CD8-positive, alpha-beta memory T cell (primary cell): ENCODE measurements at regions of chr15 and their contacts with region 1.

Region 1: GRCh38 chr15:41774062-41774881 is at the start of gene MAPKBP1:
- DNase-seq: peak; percentile 97 to 99 (median 98)
- H3K4me3 ChIP-seq: peak within 1 kb of the TSS; percentile 89
- H3K4me3 Mint-ChIP-seq: peak within 1 kb of the TSS; percentile 91 to 98 (median 95)
- H3K27ac ChIP-seq: peak within 1 kb of the TSS; percentile 68
- H3K27ac Mint-ChIP-seq: peak within 1 kb of the TSS; percentile 93 to 98 (median 96)
- H3K4me1 ChIP-seq: peaks cover 46% of the 10 kb centered on the region
- H3K4me1 Mint-ChIP-seq: peaks cover 53 to 64% (median 64%) of the 10 kb centered on the region in 3 donors
- H3K27me3 ChIP-seq: no peaks in the 10 kb centered on the region
- H3K27me3 Mint-ChIP-seq: no peaks in the 10 kb centered on the region
- total RNA-seq, gene MAPKBP1: 16.0 to 17.8 TPM

Region 2: DNA sequence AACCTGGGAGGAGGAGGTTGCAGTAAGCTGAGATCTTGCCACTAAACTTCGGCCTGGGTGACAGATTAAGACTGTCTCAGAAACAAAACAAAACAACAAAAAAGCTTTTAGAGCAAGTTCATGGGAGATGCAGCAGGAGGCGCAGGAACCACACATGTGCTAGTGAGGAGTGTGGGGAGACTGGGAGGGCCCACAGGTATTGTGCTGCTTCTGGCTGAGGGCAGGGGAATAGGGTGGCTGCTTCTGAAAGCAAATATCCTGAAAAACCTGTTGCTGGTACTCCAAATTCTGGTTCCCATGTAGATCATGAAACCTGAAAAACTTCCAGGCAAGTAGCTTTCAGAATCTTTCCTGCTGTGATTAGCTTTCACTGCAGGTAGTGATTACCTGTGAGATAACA is 193.2 kb before region 1 on chr15:
- CTCF ChIA-PET with region 1: no interaction called
- POLR2A ChIA-PET with region 1: no interaction called
- DNase-seq: no peak
- H3K4me3 ChIP-seq: no peak overlapping the region
- H3K4me3 Mint-ChIP-seq: no peak overlapping the region
- H3K27ac ChIP-seq: no peak overlapping the region
- H3K27ac Mint-ChIP-seq: no peak overlapping the region
- H3K4me1 ChIP-seq: no peaks in the 10 kb centered on the region
- H3K4me1 Mint-ChIP-seq: peaks cover 8 to 9% (median 9%) of the 10 kb centered on the region in 3 donors
- H3K27me3 ChIP-seq: no peaks in the 10 kb centered on the region
- H3K27me3 Mint-ChIP-seq: peaks cover 30 to 33% of the 10 kb centered on the region in 2 donors

Region 3: DNA sequence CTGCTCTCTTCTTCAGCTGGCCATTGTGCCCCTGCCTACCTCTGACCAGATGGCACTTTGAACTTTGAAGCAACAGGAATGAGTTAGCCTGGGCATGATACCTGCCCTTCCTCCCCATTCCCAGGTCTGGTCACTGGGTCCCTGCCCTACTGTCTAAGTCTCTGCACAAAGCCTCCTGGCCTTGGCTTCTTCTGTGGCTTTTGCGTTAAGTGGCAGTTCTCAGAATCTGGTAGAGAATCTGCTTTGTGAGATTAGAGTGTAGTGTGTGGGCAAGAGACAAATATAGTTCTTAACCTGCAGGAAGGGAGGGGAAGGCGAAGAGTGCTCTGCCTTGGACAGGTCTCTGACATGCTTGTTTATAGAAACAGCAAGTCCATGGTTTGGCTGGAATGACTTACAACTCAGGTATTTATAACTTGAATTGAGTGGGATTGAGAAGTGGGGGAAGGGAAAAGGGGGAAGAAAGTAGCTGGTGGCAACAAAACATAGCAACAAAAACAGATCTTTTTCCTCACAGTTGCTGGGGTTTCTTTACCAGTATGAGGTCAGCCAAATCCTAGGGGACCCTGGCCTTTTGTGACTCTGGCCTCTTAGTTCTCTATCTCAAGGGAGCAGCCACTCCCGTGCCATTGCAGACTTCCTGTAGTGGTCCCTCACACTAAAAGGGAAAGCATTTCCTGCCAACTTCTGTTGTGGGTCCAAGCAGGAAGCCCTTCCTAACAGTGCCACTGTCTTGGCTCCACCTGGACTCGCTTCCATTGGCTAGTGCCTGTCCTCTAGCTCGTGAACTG is 16.7 kb after region 1 on chr15:
- CTCF ChIA-PET with region 1: interaction called, 14 read pairs
- POLR2A ChIA-PET with region 1: no interaction called
- DNase-seq: no peak
- H3K4me3 ChIP-seq: no peak overlapping the region
- H3K4me3 Mint-ChIP-seq: peak overlapping the region in 2 of 7 donors; percentile 33 to 68
- H3K27ac ChIP-seq: no peak overlapping the region
- H3K27ac Mint-ChIP-seq: peak overlapping the region in 7 of 8 donors; percentile 8 to 80 (median 26)
- H3K4me1 ChIP-seq: peaks cover 22% of the 10 kb centered on the region
- H3K4me1 Mint-ChIP-seq: peaks cover 42 to 52% (median 50%) of the 10 kb centered on the region in 3 donors
- H3K27me3 ChIP-seq: no peaks in the 10 kb centered on the region
- H3K27me3 Mint-ChIP-seq: no peaks in the 10 kb centered on the region

Region 4: GRCh38 chr15:41817310-41817709 is 43.0 kb after region 1 on chr15:
- CTCF ChIA-PET with region 1: interaction called, 167 read pairs
- POLR2A ChIA-PET with region 1: interaction called, 3 read pairs
- DNase-seq: peak in 1 of 5 donors; percentile 29
- H3K4me3 ChIP-seq: no peak overlapping the region
- H3K4me3 Mint-ChIP-seq: no peak overlapping the region
- H3K27ac ChIP-seq: no peak overlapping the region
- H3K27ac Mint-ChIP-seq: peak overlapping the region in 1 of 8 donors; percentile 43
- H3K4me1 ChIP-seq: no peaks in the 10 kb centered on the region
- H3K4me1 Mint-ChIP-seq: no peaks in the 10 kb centered on the region
- H3K27me3 ChIP-seq: no peaks in the 10 kb centered on the region
- H3K27me3 Mint-ChIP-seq: no peaks in the 10 kb centered on the region

Region 5: GRCh38 chr15:41894791-41895463 is 120.7 kb after region 1 on chr15:
- CTCF ChIA-PET with region 1: interaction called, 154 read pairs
- POLR2A ChIA-PET with region 1: interaction called, 12 read pairs
- DNase-seq: peak; percentile 86 to 96 (median 88)
- H3K4me3 ChIP-seq: peak overlapping the region; percentile 29
- H3K4me3 Mint-ChIP-seq: peak overlapping the region; percentile 73 to 93 (median 84)
- H3K27ac ChIP-seq: peak overlapping the region; percentile 76
- H3K27ac Mint-ChIP-seq: peak overlapping the region; percentile 99 to 100 (median 100)
- H3K4me1 ChIP-seq: peaks cover 38% of the 10 kb centered on the region
- H3K4me1 Mint-ChIP-seq: peaks cover 29 to 59% (median 35%) of the 10 kb centered on the region in 3 donors
- H3K27me3 ChIP-seq: no peaks in the 10 kb centered on the region
- H3K27me3 Mint-ChIP-seq: peaks cover 0 to 1% of the 10 kb centered on the region in 2 donors

Region 6: DNA sequence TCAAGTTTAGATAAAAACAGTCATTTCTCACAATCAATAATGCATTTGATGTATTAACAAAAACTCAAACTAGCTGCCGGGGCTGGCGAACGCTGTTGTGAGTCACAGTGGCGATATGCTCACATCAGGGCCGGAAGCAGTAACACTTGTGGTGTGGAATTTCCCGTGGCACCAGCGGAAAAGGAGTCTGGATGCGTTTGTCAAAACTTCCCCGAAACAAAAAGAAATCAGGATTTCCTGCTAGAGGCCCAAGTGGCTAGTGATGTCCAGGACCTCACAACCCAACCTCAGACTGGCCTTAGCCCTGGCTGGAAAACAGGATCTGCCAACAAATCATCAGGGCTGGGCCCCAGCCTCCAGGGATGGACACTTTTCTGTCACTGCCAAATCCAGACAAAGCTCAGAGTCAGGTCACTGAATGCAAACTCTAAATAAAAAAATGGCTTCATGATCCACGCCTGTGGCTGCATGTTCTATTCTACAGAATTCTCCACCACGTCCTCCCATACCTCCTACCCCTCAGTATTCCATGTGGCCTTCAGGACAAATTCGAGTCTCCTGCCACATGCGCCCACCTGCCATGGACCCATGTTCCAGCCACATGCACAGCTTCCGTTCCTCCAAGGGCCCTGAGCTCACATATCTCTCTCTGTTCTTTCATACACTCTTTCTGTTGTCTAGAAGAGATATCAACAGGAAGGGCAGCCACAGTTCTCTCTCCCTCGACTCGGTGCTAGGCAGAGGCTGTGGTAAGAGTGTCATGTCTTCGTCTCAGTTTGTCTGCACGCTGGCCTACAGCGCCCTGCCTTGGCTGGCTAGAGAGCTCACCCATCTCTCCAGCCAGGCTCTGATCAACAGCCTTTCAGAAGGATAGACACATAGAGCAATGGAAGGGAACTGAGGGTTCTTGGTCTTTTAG is 162.6 kb after region 1 on chr15:
- CTCF ChIA-PET with region 1: interaction called, 56 read pairs
- POLR2A ChIA-PET with region 1: interaction called, 9 read pairs
- DNase-seq: peak; percentile 74 to 90 (median 78)
- H3K4me3 ChIP-seq: peak overlapping the region; percentile 12
- H3K4me3 Mint-ChIP-seq: peak overlapping the region; percentile 31 to 91 (median 77)
- H3K27ac ChIP-seq: peak overlapping the region; percentile 88
- H3K27ac Mint-ChIP-seq: peak overlapping the region; percentile 94 to 100 (median 100)
- H3K4me1 ChIP-seq: peaks cover 61% of the 10 kb centered on the region
- H3K4me1 Mint-ChIP-seq: peaks cover 57 to 66% (median 66%) of the 10 kb centered on the region in 3 donors
- H3K27me3 ChIP-seq: no peaks in the 10 kb centered on the region
- H3K27me3 Mint-ChIP-seq: no peaks in the 10 kb centered on the region

Region 7: GRCh38 chr15:42131826-42132806 is 357.8 kb after region 1 on chr15:
- CTCF ChIA-PET with region 1: no interaction called
- POLR2A ChIA-PET with region 1: no interaction called
- DNase-seq: no peak
- H3K4me3 ChIP-seq: no peak overlapping the region
- H3K4me3 Mint-ChIP-seq: no peak overlapping the region
- H3K27ac ChIP-seq: no peak overlapping the region
- H3K27ac Mint-ChIP-seq: no peak overlapping the region
- H3K4me1 ChIP-seq: no peaks in the 10 kb centered on the region
- H3K4me1 Mint-ChIP-seq: no peaks in the 10 kb centered on the region
- H3K27me3 ChIP-seq: no peaks in the 10 kb centered on the region
- H3K27me3 Mint-ChIP-seq: peaks cover 16 to 57% of the 10 kb centered on the region in 2 donors